ENCODE measurements at regions of chr6 and their contacts with region 1.

Region 1: DNA sequence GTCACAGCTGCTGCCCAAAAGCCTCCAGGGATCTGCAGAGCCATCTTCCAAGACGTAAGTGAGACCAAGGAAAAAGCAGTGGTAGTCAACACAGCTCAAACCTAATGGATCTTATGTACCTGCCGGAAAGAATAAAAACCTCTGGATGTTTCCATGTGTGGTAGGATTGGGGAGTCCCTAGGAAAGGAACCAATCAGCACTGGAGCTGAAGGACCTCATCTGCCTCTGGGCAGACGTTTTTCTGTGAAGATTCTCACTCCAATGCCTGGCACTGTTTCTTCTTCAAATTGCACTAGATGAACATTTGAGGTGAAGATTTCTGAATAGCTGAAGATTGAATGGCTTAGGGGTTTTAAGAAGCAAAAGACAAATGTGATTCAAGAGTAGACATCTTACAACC is at the start of gene HLA-DQB2:
- DNase-seq: no peak
- H3K4me3 ChIP-seq: no peak within 1 kb of the TSS
- H3K27ac ChIP-seq: no peak within 1 kb of the TSS
- H3K4me1 ChIP-seq: no peaks in the 10 kb centered on the region
- H3K27me3 ChIP-seq: no peaks in the 10 kb centered on the region
- CTCF ChIP-seq: no peak
- POLR2A ChIP-seq: no peak
- total RNA-seq, gene HLA-DQB2: 0.41 to 9.8 TPM in 2 of 4 donors, not detected in the others

Region 2: DNA sequence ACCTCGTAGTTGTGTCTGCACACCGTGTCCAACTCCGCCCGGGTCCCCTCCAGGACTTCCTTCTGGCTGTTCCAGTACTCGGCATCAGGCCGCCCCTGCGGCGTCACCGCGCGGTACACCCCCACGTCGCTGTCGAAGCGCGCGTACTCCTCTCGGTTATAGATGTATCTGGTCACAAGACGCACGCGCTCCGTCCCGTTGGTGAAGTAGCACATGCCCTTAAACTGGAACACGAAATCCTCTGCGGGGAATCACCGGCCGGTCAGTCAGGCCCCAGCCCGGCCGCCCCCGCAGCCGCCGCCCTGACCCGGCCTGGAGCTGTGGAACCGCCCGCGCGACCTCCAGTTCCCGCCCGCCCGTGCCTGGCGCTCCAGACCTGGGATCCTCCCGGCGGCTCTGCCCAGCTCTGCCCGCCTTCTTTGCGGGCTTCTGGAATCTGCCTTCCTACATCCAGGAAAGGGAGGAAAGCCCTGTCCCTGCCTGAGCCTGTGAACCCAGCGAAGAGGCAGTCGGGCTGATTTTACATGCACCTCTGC is 98.5 kb before region 1 on chr6:
- intact Hi-C with region 1: loop called (anchors 5 kb)
- DNase-seq: peak in 1 of 2 donors; percentile 26
- H3K4me3 ChIP-seq: no peak overlapping the region
- H3K27ac ChIP-seq: no peak overlapping the region
- H3K4me1 ChIP-seq: no peaks in the 10 kb centered on the region
- H3K27me3 ChIP-seq: no peaks in the 10 kb centered on the region
- CTCF ChIP-seq: no peak
- POLR2A ChIP-seq: no peak